CD4-positive, alpha-beta T cell (primary cell): ENCODE measurements at regions of chr10 and their contacts with region 1.

Region 1: GRCh38 chr10:47111329-47111862 is 188.6 kb upstream of the GDF10 start:
- DNase-seq: no peak
- ATAC-seq: no peak
- H3K4me3 ChIP-seq: no peak overlapping the region
- H3K4me3 Mint-ChIP-seq: no peak overlapping the region
- H3K27ac ChIP-seq: no peak overlapping the region
- H3K27ac Mint-ChIP-seq: no peak overlapping the region
- H3K4me1 ChIP-seq: no peaks in the 10 kb centered on the region
- H3K4me1 Mint-ChIP-seq: no peaks in the 10 kb centered on the region
- H3K27me3 ChIP-seq: no peaks in the 10 kb centered on the region
- H3K27me3 Mint-ChIP-seq: no peaks in the 10 kb centered on the region
- CTCF ChIP-seq: no peak

Region 2: GRCh38 chr10:47146572-47146971 is 35.2 kb after region 1 on chr10:
- CTCF ChIA-PET with region 1: no interaction called
- POLR2A ChIA-PET with region 1: no interaction called
- intact Hi-C with region 1: loop called in 1 of 2 experiments (anchors 5 kb)
- DNase-seq: no peak
- ATAC-seq: no peak
- H3K4me3 ChIP-seq: no peak overlapping the region
- H3K4me3 Mint-ChIP-seq: no peak overlapping the region
- H3K27ac ChIP-seq: no peak overlapping the region
- H3K27ac Mint-ChIP-seq: no peak overlapping the region
- H3K4me1 ChIP-seq: no peaks in the 10 kb centered on the region
- H3K4me1 Mint-ChIP-seq: no peaks in the 10 kb centered on the region
- H3K27me3 ChIP-seq: no peaks in the 10 kb centered on the region
- H3K27me3 Mint-ChIP-seq: no peaks in the 10 kb centered on the region
- CTCF ChIP-seq: no peak